ENCODE measurements at regions of chr11 and their contacts with region 1.

Region 1: DNA sequence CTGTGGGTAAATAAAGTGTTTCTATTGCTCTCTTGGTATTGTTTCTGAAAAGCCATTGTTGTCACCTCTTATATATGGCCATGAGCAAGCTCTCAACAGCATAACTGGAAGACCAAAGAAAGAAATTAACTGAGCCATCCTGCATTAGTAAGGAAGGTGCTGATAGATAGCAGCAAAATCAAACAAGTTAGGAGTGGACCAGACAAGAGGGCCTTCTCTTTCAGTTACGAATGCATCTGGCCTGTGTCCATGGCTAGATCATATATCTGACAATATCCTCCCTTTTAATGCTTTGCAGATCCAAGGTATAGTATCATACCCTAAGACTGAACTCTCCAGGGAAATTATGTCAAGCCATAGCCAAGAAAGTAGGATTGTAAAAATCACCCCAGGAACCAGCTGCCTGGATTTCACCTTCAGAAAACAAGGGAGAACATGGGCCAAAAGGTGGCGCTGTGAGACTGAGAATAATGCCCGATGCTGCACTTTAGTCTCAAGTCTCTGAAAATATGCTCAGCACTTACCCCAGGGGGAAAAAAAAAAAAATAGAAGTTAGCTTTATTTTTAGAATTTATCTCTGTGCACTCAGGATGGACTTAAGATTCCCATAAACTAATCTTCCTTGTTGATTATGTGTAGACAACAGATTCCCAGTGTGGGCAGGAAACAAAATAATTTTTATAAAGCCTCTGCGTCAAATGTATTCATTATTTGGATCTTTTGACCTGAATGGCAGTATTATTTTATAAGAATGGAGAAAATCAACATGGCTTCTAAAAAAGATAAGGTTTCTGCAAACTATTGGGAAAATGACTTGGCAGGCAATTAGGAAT is 415.1 kb downstream of the ETS1 start:
- DNase-seq: peak; percentile 77
- H3K4me3 Mint-ChIP-seq: no peak overlapping the region
- H3K27ac Mint-ChIP-seq: peak overlapping the region; percentile 47
- H3K4me1 Mint-ChIP-seq: peaks cover 31% of the 10 kb centered on the region
- H3K27me3 Mint-ChIP-seq: no peaks in the 10 kb centered on the region
- CTCF ChIP-seq: peak; percentile 57

Region 2: GRCh38 chr11:128198216-128198772 is 26.0 kb after region 1 on chr11:
- CTCF ChIA-PET with region 1: no interaction called
- intact Hi-C with region 1: no loop called
- DNase-seq: no peak
- H3K4me3 Mint-ChIP-seq: no peak overlapping the region
- H3K27ac Mint-ChIP-seq: no peak overlapping the region
- H3K4me1 Mint-ChIP-seq: no peaks in the 10 kb centered on the region
- H3K27me3 Mint-ChIP-seq: no peaks in the 10 kb centered on the region
- CTCF ChIP-seq: no peak

Region 3: DNA sequence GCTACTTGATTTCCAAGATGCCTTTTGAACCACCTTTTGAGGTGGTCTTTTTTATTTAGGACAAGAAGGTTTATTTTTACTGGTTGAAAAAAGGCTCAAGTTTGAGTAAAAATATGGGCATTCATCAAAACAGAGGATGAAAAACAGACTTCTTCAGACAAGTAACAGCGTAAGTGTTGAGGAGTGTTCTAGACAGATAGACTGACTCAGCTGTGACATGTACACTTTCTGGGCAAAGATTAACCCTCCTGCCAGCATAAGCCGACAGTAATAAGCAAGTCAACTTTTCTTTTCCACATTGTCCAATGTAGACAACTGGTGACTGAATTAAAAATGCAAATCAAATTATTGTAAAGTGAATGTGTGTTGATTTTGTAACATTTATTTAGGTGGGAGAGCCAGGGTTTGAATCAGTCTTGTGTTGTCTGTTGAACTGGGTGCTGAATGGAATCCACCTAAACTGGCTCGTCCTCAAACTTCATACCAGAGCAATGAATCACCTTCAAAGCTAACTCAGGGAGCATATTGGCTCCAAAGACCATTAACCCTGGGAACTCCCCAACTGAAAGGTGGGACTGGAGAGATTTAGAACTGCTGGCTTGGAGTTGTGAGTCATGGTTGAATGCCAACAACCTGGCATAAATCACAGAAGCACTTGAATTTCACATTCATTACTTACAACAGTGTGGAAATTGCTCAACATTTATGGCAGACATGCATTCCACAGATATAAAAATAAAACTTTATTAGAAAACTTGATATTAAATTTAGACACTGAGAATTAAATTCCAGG is 38.1 kb after region 1 on chr11:
- CTCF ChIA-PET with region 1: interaction called, 5 read pairs
- intact Hi-C with region 1: loop called (anchors 2 kb)
- DNase-seq: peak; percentile 76
- H3K4me3 Mint-ChIP-seq: no peak overlapping the region
- H3K27ac Mint-ChIP-seq: peak overlapping the region; percentile 72
- H3K4me1 Mint-ChIP-seq: peaks cover 33% of the 10 kb centered on the region
- H3K27me3 Mint-ChIP-seq: no peaks in the 10 kb centered on the region
- CTCF ChIP-seq: no peak

Region 4: DNA sequence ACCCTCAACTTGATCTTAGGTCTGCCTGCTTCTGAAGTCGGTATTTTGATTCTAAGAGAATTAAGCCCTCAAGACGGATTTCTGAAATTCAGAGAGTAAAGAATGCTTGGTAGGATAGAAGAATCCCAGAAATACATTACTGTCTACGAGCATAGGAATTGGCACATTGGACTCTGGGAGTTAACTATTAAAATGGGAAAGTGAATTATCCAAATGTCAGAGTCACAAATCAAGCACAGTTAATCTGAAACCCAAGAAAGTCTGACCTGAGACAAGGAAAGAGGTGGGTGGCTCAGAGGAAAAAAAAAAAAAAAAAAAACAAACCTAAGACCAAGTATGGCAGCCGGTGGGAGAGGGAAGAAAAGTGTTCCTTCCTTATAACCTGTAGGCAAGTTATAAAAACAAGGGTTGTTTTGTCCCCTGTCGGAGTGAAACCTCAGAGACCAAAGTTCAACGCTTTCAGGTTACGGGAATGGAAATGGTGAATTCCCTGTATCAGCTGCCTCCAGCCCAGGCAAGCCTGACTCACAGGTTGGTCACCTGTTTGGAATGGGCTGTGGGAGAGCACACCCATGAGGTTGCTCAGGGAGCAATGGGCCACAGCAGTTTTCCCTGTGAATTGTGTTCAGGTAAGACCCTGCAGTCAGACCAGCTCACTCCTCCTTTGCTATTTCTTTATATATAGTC is 276.1 kb after region 1 on chr11:
- CTCF ChIA-PET with region 1: no interaction called
- intact Hi-C with region 1: loop called (anchors 5 kb)
- DNase-seq: peak; percentile 84
- H3K4me3 Mint-ChIP-seq: no peak overlapping the region
- H3K27ac Mint-ChIP-seq: peak overlapping the region; percentile 96
- H3K4me1 Mint-ChIP-seq: peaks cover 47% of the 10 kb centered on the region
- H3K27me3 Mint-ChIP-seq: no peaks in the 10 kb centered on the region
- CTCF ChIP-seq: no peak

Region 5: GRCh38 chr11:128522055-128522942 is 350.0 kb after region 1 on chr11:
- CTCF ChIA-PET with region 1: interaction called, 4 read pairs
- intact Hi-C with region 1: loop called (anchors 5 kb)
- DNase-seq: peak; percentile 88
- H3K4me3 Mint-ChIP-seq: peak overlapping the region; percentile 76
- H3K27ac Mint-ChIP-seq: peak overlapping the region; percentile 65
- H3K4me1 Mint-ChIP-seq: peaks cover 48% of the 10 kb centered on the region
- H3K27me3 Mint-ChIP-seq: no peaks in the 10 kb centered on the region
- CTCF ChIP-seq: no peak

Region 6: GRCh38 chr11:128658502-128658901 is 486.2 kb after region 1 on chr11:
- CTCF ChIA-PET with region 1: no interaction called
- intact Hi-C with region 1: no loop called
- DNase-seq: no peak
- H3K4me3 Mint-ChIP-seq: no peak overlapping the region
- H3K27ac Mint-ChIP-seq: no peak overlapping the region
- H3K4me1 Mint-ChIP-seq: peaks cover 10% of the 10 kb centered on the region
- H3K27me3 Mint-ChIP-seq: no peaks in the 10 kb centered on the region
- CTCF ChIP-seq: no peak

Region 7: GRCh38 chr11:128831174-128832120 is 659.2 kb after region 1 on chr11:
- CTCF ChIA-PET with region 1: interaction called, 8 read pairs
- intact Hi-C with region 1: loop called (anchors 1 kb)
- DNase-seq: peak; percentile 76
- H3K4me3 Mint-ChIP-seq: peak overlapping the region; percentile 44
- H3K27ac Mint-ChIP-seq: peak overlapping the region; percentile 50
- H3K4me1 Mint-ChIP-seq: peaks cover 8% of the 10 kb centered on the region
- H3K27me3 Mint-ChIP-seq: no peaks in the 10 kb centered on the region
- CTCF ChIP-seq: peak; percentile 64